B cell (primary cell): ENCODE measurements at regions of chr1 and their contacts with region 1.

Region 1: DNA sequence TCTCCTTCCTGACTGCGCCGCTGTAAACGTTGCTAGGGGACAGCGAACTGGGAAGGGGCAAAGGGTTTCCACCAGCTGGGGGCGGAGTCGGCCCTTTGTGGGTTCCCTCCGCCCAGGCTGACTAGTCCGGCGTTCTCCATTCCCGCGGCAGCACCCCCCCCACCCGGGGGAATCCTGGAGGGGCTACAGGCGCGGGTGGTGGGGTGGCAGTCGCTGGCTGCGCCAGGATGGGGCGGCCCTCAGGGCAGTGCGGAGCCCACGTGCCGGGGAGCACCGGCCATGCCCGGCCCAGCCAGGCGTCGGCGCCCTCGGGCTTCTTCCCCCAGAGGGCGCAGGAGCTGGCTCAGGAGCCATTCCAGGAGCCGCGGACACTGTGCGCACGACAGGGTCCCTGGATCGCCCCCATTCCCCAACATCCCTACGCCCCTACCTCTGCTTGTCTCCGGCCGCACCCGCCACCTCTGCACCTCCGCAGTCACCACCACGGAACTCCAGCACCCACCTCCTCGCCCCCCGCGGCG is 476 bp downstream of the BATF3 start:
- DNase-seq: peak; percentile 69
- ATAC-seq: peak; percentile 65
- H3K4me3 ChIP-seq: peak overlapping the region; percentile 34 to 70 (median 65)
- H3K4me3 Mint-ChIP-seq: peak overlapping the region; percentile 92
- H3K27ac ChIP-seq: no peak overlapping the region
- H3K27ac Mint-ChIP-seq: peak overlapping the region; percentile 27
- H3K4me1 ChIP-seq: peaks cover 31 to 36% of the 10 kb centered on the region in 2 donors
- H3K4me1 Mint-ChIP-seq: peaks cover 39% of the 10 kb centered on the region
- H3K27me3 ChIP-seq: peaks cover 0 to 14% (median 3%) of the 10 kb centered on the region in 4 experiments
- H3K27me3 Mint-ChIP-seq: peaks cover 4% of the 10 kb centered on the region
- CTCF ChIP-seq: peak; percentile 69

Region 2: DNA sequence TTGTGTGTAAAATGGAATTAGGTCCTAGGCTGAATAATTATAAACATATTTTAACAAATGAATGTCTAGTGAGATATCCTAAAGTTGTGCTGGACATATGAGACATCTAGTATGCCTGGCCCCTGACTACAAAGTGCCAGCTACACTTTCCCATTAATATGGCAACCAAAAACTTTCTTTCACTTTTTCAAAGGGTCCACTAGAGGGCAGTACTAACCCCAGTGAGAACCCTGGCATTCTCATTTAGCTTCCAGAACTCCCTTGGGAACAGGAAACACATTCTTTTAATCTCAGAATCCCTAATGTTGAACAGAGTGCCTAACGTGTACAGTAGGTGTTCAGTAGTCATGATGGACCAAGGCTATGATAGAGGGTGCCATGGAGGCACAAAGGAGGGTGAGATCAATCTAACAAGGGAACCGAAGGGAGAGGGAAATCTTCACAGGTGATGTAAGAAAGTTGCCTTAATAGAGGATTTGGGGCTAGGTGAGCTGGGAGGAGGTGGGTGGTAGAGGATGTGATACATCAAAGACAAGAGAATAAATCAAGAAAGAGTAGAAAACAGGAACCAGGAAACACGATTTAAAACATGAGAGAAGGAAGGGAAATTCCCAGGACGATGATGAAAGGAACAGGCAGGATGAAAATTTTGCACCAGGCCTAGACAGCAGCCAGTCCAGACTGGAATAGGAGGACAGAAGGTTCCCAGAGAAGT is 50.8 kb after region 1 on chr1:
- CTCF ChIA-PET with region 1: interaction called, 7 read pairs
- POLR2A ChIA-PET with region 1: no interaction called
- intact Hi-C with region 1: loop called (anchors 2 kb)
- DNase-seq: peak; percentile 42
- ATAC-seq: peak; percentile 34
- H3K4me3 ChIP-seq: no peak overlapping the region
- H3K4me3 Mint-ChIP-seq: peak overlapping the region; percentile 0
- H3K27ac ChIP-seq: peak overlapping the region in 1 of 2 donors; percentile 80
- H3K27ac Mint-ChIP-seq: peak overlapping the region; percentile 15
- H3K4me1 ChIP-seq: peaks cover 34 to 39% of the 10 kb centered on the region in 2 donors
- H3K4me1 Mint-ChIP-seq: peaks cover 37% of the 10 kb centered on the region
- H3K27me3 ChIP-seq: no peaks in the 10 kb centered on the region
- H3K27me3 Mint-ChIP-seq: no peaks in the 10 kb centered on the region
- CTCF ChIP-seq: peak; percentile 62

Region 3: DNA sequence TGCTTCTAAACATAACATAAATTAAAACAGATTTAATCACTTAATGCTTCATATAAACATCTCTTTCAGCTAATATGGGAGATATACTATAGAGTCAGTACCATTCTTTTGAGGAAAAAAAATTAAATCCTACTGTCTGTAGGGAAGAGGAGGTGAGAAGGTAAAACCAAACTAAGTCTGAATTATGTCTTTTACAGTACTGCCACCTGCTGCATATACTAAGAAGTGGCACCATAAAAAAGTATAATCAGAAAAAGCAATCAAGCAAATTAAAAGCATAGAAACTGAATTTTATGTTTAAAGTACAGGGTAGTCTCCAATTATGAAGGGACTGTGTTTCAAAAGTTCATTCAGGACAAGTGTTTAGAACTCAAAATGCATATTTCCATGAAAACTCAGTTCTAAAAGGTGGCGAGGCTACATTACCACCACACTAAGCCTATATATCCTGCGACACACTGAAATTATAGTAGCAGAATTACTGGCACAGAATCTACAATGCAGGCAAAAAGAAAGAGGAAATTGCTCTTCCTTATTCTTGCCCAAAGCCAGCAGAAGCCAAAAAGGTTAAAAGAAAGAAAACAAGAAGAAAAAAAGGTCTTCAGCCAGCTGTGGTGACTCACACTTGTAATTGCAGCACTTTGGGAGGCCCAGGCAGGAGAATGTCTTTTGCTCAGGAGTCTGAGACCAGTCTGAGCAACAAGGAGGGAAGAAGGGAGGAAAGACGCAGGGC is 83.4 kb after region 1 on chr1:
- CTCF ChIA-PET with region 1: interaction called, 4 read pairs
- POLR2A ChIA-PET with region 1: no interaction called
- intact Hi-C with region 1: loop called (anchors 2 kb)
- DNase-seq: peak; percentile 54
- ATAC-seq: peak; percentile 51
- H3K4me3 ChIP-seq: no peak overlapping the region
- H3K4me3 Mint-ChIP-seq: no peak overlapping the region
- H3K27ac ChIP-seq: no peak overlapping the region
- H3K27ac Mint-ChIP-seq: no peak overlapping the region
- H3K4me1 ChIP-seq: no peaks in the 10 kb centered on the region
- H3K4me1 Mint-ChIP-seq: no peaks in the 10 kb centered on the region
- H3K27me3 ChIP-seq: no peaks in the 10 kb centered on the region
- H3K27me3 Mint-ChIP-seq: no peaks in the 10 kb centered on the region
- CTCF ChIP-seq: peak; percentile 87